ENCODE measurements at regions of chr22 and their contacts with region 1.

Region 1: DNA sequence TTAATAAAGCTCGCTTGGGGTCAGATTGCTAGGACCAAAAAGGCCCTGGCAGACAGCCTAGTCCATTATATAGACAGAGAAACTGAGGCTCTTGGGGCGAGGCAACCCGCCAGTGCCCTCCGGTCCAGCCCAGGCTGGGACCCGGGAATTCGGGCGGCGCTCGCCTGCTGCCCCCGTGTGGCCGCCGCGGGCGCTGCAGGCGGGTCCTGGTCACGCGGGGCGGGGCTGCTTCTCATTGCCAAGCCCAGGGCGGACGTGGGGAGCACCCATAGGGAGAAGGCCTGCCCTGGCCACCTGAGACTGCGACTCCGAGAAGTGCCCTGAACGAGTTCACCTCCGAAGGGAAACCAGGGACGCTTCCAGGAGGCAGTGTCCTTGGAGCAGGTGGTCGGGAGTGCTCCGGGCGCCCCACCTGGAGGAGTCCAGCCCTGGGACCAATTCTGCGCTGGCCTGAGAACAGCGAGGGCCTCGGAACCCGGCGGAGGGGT is 36.0 kb upstream of the CSNK1E start:
- DNase-seq: peak; percentile 47 to 93 (median 80)
- ATAC-seq: peak; percentile 82 to 96 (median 91)
- H3K4me3 ChIP-seq: no peak overlapping the region
- H3K27ac ChIP-seq: no peak overlapping the region
- H3K4me1 ChIP-seq: no peaks in the 10 kb centered on the region
- H3K27me3 ChIP-seq: no peaks in the 10 kb centered on the region
- CTCF ChIP-seq: peak; percentile 96 to 99 (median 98)

Region 2: GRCh38 chr22:38257181-38257580 is 96.0 kb before region 1 on chr22:
- intact Hi-C with region 1: loop called in 1 of 3 experiments (anchors 5 kb)
- DNase-seq: no peak
- ATAC-seq: peak in 3 of 4 donors; percentile 5 to 9 (median 6)
- H3K4me3 ChIP-seq: peak overlapping the region in 1 of 4 donors; percentile 2
- H3K27ac ChIP-seq: peak overlapping the region in 3 of 4 donors; percentile 46 to 76 (median 69)
- H3K4me1 ChIP-seq: peaks cover 5 to 39% (median 12%) of the 10 kb centered on the region in 3 donors
- H3K27me3 ChIP-seq: no peaks in the 10 kb centered on the region
- CTCF ChIP-seq: no peak

Measured in pancreas (tissue), 10 donors.